Activated CD8-positive, alpha-beta memory T cell treated with anti-CD3 and anti-CD28 coated beads, Interleukin-2, amount 10 ng/mL, durations not matched to agents 7 days and 5 days (primary cell): ENCODE measurements at regions of chr2 and their contacts with region 1.

Region 1: GRCh38 chr2:160324161-160324800 is 124.2 kb upstream of the ITGB6 start:
- DNase-seq: peak; percentile 64
- ATAC-seq: no peak
- H3K4me3 Mint-ChIP-seq: no peak overlapping the region
- H3K27ac Mint-ChIP-seq: no peak overlapping the region
- H3K4me1 Mint-ChIP-seq: peaks cover 47% of the 10 kb centered on the region
- H3K27me3 Mint-ChIP-seq: peaks cover 7% of the 10 kb centered on the region

Region 2: GRCh38 chr2:160859085-160859484 is 534.8 kb after region 1 on chr2:
- CTCF ChIA-PET with region 1: no interaction called
- DNase-seq: no peak
- ATAC-seq: no peak
- H3K4me3 Mint-ChIP-seq: no peak overlapping the region
- H3K27ac Mint-ChIP-seq: no peak overlapping the region
- H3K4me1 Mint-ChIP-seq: no peaks in the 10 kb centered on the region
- H3K27me3 Mint-ChIP-seq: peaks cover 3% of the 10 kb centered on the region

Region 3: DNA sequence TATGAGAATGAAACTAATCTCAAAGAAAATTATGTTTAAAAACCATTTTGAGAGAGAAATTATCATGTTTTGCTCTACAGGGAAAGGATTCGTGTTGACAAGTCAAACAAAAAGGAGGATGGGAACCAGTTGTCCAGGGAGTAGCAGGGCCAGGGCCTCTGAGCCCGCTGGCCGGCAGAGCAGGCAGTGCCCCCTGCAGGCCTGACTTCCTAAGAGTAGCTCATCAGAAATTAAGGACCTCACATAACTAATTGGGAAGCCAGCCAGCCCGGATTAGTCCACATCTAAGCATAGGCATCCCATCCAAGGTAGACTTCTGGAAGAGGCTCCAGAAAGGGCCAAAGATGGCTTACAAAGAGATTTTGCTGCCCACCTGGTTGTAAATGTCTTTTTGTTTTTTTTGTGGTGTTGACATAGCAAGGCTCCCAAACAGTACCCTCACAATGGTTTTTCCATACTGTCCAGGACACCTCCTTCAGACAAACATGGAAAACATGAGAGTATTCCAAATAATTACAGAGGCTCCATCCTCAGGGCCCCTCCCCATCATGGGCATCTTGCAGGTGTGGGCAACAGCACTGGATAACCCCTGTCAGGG is 594.7 kb after region 1 on chr2:
- CTCF ChIA-PET with region 1: interaction called, 11 read pairs
- DNase-seq: peak; percentile 45
- ATAC-seq: peak; percentile 45
- H3K4me3 Mint-ChIP-seq: no peak overlapping the region
- H3K27ac Mint-ChIP-seq: no peak overlapping the region
- H3K4me1 Mint-ChIP-seq: no peaks in the 10 kb centered on the region
- H3K27me3 Mint-ChIP-seq: no peaks in the 10 kb centered on the region